ENCODE measurements at regions of chr15 and their contacts with region 1.

Region 1: GRCh38 chr15:75367913-75368688 is at the start of gene MAN2C1:
- DNase-seq: peak; percentile 94 to 99
- H3K4me3 ChIP-seq: peak within 1 kb of the TSS; percentile 75
- CTCF ChIP-seq: no peak
- POLR2A ChIP-seq: peak in 1 of 2 donors; percentile 67
- total RNA-seq, gene MAN2C1: 84.9 to 199 (median 136) TPM

Region 2: DNA sequence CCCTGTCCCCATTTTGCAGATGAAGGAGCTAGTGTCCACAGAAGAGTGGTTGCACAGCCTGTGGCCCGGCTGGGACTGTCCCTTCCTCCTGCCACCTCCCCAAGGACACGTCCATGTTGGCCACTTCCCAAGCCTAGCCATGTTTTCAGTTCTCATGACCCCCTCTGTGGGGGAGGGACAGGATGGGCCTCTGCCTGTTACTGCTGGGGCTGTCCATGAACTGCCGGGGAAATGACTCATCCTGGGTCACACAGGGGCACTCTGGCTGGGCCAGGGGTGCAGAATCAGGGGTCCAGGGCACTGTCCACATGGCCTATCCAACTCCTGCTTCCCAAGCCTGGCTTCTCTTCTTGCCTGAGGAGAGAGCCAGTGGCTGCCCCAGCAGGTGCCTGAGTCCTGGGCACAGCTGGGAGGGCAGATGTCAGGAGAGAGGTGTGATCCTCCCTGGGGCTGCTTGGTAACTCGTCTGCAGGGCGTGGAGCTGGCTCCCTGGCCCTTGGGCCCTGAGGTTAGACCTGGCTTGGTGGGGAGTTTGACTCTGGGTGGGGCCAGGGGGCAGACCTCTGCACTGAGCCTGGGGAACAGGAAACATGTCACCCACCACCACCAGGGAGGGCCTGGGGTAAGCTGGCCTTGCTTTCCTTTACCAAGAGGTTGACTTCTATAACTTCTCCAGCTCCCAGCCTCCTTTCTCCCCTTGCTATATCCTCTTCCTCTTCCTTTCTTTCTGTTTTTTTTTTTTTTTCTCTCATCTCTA is 283.4 kb after region 1 on chr15:
- intact Hi-C with region 1: loop called (anchors 10 kb)
- DNase-seq: peak in 1 of 2 donors; percentile 90
- H3K4me3 ChIP-seq: no peak overlapping the region
- CTCF ChIP-seq: no peak
- POLR2A ChIP-seq: no peak